ENCODE measurements at regions of chr9 and their contacts with region 1.

Region 1: DNA sequence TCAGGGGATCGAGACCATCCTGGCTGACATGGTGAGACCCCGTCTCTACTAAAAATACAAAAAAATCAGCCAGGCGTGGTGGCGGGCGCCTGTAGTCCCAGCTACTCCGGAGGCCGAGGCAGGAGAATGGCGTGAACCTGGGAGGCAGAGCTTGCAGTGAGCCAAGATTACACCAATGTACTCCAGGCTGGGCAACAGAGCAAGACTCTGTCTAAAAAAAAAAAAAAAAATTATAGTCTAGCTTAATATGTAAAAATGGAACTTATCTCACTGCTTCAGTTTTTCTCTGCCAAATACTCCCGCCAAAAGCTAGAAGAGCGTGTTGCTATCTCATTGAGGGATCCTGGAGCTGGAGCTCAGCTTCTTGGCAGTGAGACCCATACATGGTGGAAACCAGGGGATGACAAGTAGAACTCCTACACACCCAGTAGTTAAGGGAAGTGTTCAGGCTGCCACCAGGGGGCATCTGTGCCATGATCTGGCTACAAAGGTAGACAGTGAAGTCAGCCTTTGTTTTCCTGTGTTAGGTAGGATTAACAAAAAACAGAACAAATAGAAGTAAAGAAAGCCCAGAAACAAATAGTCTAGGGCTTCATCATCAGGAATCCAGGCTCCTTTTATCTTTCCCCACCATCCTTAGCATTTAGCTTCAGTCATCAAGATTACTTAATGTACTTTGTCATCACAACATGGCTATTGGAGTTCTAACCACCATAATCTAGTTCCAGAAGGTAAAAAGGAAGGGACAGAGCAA is 33.6 kb upstream of the GLIPR2 start:
- DNase-seq: peak; percentile 79 to 95 (median 86)
- ATAC-seq: peak; percentile 100
- H3K4me3 ChIP-seq: no peak overlapping the region
- H3K4me3 Mint-ChIP-seq: no peak overlapping the region
- H3K27ac ChIP-seq: no peak overlapping the region
- H3K27ac Mint-ChIP-seq: no peak overlapping the region
- H3K4me1 ChIP-seq: peaks cover 8% of the 10 kb centered on the region
- H3K4me1 Mint-ChIP-seq: peaks cover 10% of the 10 kb centered on the region
- H3K27me3 ChIP-seq: no peaks in the 10 kb centered on the region
- H3K27me3 Mint-ChIP-seq: no peaks in the 10 kb centered on the region
- CTCF ChIP-seq: peak; percentile 80

Region 2: DNA sequence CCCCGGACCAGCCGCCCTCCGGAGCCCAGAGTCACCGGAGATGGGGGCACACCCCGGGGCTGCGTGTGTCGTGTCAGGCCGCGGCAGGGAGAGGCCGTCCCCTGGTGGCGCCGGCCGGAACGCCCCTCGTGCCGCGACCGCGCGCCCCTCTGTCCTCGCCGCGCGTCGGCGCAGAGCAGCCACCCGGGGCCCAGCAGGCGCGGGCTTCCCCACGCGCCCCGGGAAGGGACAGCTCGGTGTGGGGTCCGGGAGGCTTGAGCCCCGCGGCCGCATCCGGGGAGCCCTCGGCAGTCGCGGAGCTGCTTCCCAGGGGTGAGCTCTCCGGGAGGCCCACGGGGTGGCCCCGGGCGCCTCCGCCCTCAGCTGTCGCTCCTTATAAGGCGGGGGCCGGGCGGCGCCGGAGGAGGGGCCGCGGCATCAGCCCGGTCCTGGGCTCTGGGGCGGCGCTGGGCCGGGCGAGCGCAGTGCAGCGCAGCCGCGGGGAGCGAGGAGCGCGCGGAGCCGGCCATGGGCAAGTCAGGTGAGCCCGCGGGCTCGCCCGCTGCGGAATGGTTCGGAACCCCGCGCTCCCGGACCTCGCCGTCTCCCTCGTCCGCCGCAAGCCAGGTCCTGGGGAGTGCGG is 33.5 kb after region 1 on chr9 and contains the start of gene GLIPR2:
- CTCF ChIA-PET with region 1: interaction called, 10 read pairs
- POLR2A ChIA-PET with region 1: interaction called, 3 read pairs
- intact Hi-C with region 1: loop called in 1 of 2 experiments (anchors 2 kb)
- DNase-seq: peak; percentile 53 to 91 (median 72)
- ATAC-seq: peak; percentile 93
- H3K4me3 ChIP-seq: peak within 1 kb of the TSS; percentile 85
- H3K4me3 Mint-ChIP-seq: peak within 1 kb of the TSS; percentile 98
- H3K27ac ChIP-seq: peak within 1 kb of the TSS; percentile 53 to 59
- H3K27ac Mint-ChIP-seq: peak within 1 kb of the TSS; percentile 92
- H3K4me1 ChIP-seq: peaks cover 53% of the 10 kb centered on the region
- H3K4me1 Mint-ChIP-seq: peaks cover 51% of the 10 kb centered on the region
- H3K27me3 ChIP-seq: no peaks in the 10 kb centered on the region
- H3K27me3 Mint-ChIP-seq: no peaks in the 10 kb centered on the region
- CTCF ChIP-seq: no peak
- total RNA-seq, gene GLIPR2: 13.6 to 13.7 TPM

Region 3: GRCh38 chr9:36148311-36149051 is 45.6 kb after region 1 on chr9:
- CTCF ChIA-PET with region 1: interaction called, 15 read pairs
- POLR2A ChIA-PET with region 1: interaction called, 11 read pairs
- intact Hi-C with region 1: no loop called
- DNase-seq: peak; percentile 36 to 88 (median 66)
- ATAC-seq: no peak
- H3K4me3 ChIP-seq: no peak overlapping the region
- H3K4me3 Mint-ChIP-seq: peak overlapping the region; percentile 31
- H3K27ac ChIP-seq: peak overlapping the region; percentile 52 to 58
- H3K27ac Mint-ChIP-seq: peak overlapping the region; percentile 98
- H3K4me1 ChIP-seq: peaks cover 99% of the 10 kb centered on the region
- H3K4me1 Mint-ChIP-seq: peaks cover 84% of the 10 kb centered on the region
- H3K27me3 ChIP-seq: no peaks in the 10 kb centered on the region
- H3K27me3 Mint-ChIP-seq: no peaks in the 10 kb centered on the region
- CTCF ChIP-seq: no peak